PC-3 (cell line): ENCODE measurements at regions of chr18 and their contacts with region 1.

Region 1: GRCh38 chr18:30457156-30457555 is 585.4 kb downstream of the DSC3 start:
- DNase-seq: peak; percentile 41
- ATAC-seq: peak; percentile 66
- H3K4me3 ChIP-seq: no peak overlapping the region
- H3K27ac ChIP-seq: no peak overlapping the region
- H3K4me1 ChIP-seq: no peaks in the 10 kb centered on the region
- H3K27me3 ChIP-seq: no peaks in the 10 kb centered on the region
- CTCF ChIP-seq: peak; percentile 46; the same call in 1 of the 2 replicates

Region 2: DNA sequence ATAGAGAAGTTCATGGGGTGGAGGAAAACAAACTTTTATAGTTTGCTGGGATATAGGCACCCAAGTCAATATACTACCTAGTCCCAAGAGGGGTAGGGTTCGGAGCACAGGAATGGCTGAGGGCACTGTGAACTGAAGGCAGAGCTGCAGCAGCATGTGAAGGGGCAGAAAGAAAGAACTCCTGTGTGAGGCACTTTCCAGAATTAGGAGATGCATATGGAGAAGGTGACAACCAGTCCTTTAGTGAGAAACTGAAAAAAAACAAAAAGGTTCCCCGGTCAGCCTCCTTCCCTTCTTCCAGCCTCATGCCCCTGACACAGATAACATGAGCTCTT is 156.3 kb after region 1 on chr18:
- CTCF ChIA-PET with region 1: no interaction called
- POLR2A ChIA-PET with region 1: no interaction called
- intact Hi-C with region 1: no loop called
- DNase-seq: no peak
- ATAC-seq: no peak
- H3K4me3 ChIP-seq: no peak overlapping the region
- H3K27ac ChIP-seq: no peak overlapping the region
- H3K4me1 ChIP-seq: no peaks in the 10 kb centered on the region
- H3K27me3 ChIP-seq: no peaks in the 10 kb centered on the region
- CTCF ChIP-seq: no peak

Region 3: DNA sequence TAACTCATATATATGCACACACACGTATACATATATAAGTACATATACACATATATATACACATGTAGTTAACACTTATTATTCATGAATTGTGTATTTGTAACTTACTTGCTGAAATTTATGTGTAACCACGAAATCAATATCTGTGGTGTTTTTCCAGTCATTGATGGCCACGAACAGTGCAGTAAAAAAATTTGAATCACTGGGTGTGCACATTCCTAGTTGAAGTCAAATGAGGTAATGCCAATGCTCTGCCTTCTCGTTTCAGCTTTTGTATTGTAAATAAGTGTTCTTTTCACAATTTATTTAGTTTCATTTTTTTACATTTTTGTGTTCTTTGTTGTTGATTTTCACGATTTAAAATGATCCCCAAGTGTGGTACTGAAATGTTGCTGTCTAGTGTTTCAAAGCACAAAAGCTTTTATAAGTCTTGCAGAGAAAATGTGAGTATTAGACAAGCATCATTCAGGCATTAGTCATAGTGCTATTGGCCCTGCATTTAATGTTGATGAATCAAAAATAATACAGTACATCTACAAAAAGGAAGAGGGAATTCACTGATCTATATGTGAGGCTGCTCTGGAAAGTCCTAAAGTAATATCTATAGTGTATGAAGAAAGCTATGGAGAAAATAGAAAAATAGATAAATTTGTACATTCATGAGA is 166.4 kb after region 1 on chr18:
- CTCF ChIA-PET with region 1: no interaction called
- POLR2A ChIA-PET with region 1: no interaction called
- intact Hi-C with region 1: loop called (anchors 10 kb)
- DNase-seq: peak; percentile 70
- ATAC-seq: peak; percentile 94
- H3K4me3 ChIP-seq: 0 out of 2 replicates have a peak overlapping the region, but pooled peaks have one; percentile 15
- H3K27ac ChIP-seq: peak overlapping the region; percentile 19
- H3K4me1 ChIP-seq: peaks cover 17% of the 10 kb centered on the region
- H3K27me3 ChIP-seq: no peaks in the 10 kb centered on the region
- CTCF ChIP-seq: no peak

Region 4: GRCh38 chr18:30828700-30829099 is 371.5 kb after region 1 on chr18:
- CTCF ChIA-PET with region 1: no interaction called
- POLR2A ChIA-PET with region 1: no interaction called
- intact Hi-C with region 1: loop called (anchors 10 kb)
- DNase-seq: peak; percentile 78
- ATAC-seq: peak; percentile 100
- H3K4me3 ChIP-seq: no peak overlapping the region
- H3K27ac ChIP-seq: no peak overlapping the region; the same call in 1 of the 2 replicates
- H3K4me1 ChIP-seq: peaks cover 14% of the 10 kb centered on the region
- H3K27me3 ChIP-seq: no peaks in the 10 kb centered on the region
- CTCF ChIP-seq: no peak

Region 5: DNA sequence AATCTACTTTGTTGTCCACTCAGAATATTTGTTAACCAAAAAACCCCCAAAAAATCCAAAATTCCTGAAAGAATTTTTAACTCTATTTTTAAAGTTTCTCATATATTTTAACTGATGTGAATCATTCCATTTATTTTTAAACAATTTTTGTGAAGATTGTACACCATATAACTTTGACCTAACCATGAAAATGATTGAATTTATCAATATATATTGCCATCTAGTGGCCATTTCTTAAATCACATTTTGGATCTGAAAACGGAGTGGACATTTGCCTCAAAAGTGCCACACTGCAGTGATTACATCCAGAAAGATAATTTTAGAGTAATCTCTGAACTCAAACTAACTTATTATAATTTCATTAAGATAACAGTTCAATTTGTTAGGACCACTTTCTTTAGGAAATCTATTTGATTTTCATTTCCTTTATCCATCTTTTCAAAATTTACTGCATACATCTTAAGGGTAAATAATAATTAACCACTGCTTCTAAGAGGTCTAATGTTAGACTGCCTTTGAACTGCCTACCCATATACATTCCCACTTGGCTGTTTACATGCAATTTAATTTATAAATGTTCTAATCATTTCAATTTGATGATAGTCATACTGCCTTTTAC is 514.3 kb after region 1 on chr18:
- CTCF ChIA-PET with region 1: no interaction called
- POLR2A ChIA-PET with region 1: no interaction called
- intact Hi-C with region 1: loop called (anchors 5 kb)
- DNase-seq: peak; percentile 81
- ATAC-seq: no peak
- H3K4me3 ChIP-seq: no peak overlapping the region
- H3K27ac ChIP-seq: no peak overlapping the region
- H3K4me1 ChIP-seq: no peaks in the 10 kb centered on the region
- H3K27me3 ChIP-seq: no peaks in the 10 kb centered on the region
- CTCF ChIP-seq: peak; percentile 70